AG04450 (cell line): ENCODE measurements at regions of chr2 and their contacts with region 1.

Region 1: GRCh38 chr2:202941771-202942170 is 29.7 kb downstream of the CARF start:
- DNase-seq: peak; percentile 7
- H3K4me3 ChIP-seq: no peak overlapping the region
- H3K27ac ChIP-seq: no peak overlapping the region
- H3K27me3 ChIP-seq: no peaks in the 10 kb centered on the region
- CTCF ChIP-seq: no peak

Region 2: GRCh38 chr2:202510911-202511310 is 430.9 kb before region 1 on chr2:
- CTCF ChIA-PET with region 1: no interaction called
- POLR2A ChIA-PET with region 1: no interaction called
- DNase-seq: no peak
- H3K4me3 ChIP-seq: no peak overlapping the region
- H3K27ac ChIP-seq: no peak overlapping the region
- H3K27me3 ChIP-seq: no peaks in the 10 kb centered on the region
- CTCF ChIP-seq: no peak

Region 3: GRCh38 chr2:203360833-203361430 is 419.2 kb after region 1 on chr2:
- CTCF ChIA-PET with region 1: no interaction called
- POLR2A ChIA-PET with region 1: interaction called, 11 read pairs
- DNase-seq: no peak
- H3K4me3 ChIP-seq: no peak overlapping the region
- H3K27ac ChIP-seq: no peak overlapping the region
- H3K27me3 ChIP-seq: no peaks in the 10 kb centered on the region
- CTCF ChIP-seq: no peak